Left ventricle myocardium inferior (tissue), 1 donor: ENCODE measurements at regions of chr16 and their contacts with region 1.

Region 1: GRCh38 chr16:54817446-54817845 is 113.2 kb upstream of the IRX5 start:
- DNase-seq: no peak
- H3K4me3 ChIP-seq: no peak overlapping the region
- H3K27ac ChIP-seq: no peak overlapping the region
- H3K4me1 ChIP-seq: no peaks in the 10 kb centered on the region
- H3K27me3 ChIP-seq: no peaks in the 10 kb centered on the region
- CTCF ChIP-seq: peak; percentile 54

Region 2: GRCh38 chr16:54286090-54286993 is 531.1 kb before region 1 on chr16 and contains the start of gene IRX3:
- intact Hi-C with region 1: loop called (anchors 10 kb)
- DNase-seq: peak; percentile 93
- H3K4me3 ChIP-seq: peak within 1 kb of the TSS; percentile 83
- H3K27ac ChIP-seq: peak within 1 kb of the TSS; percentile 93
- H3K4me1 ChIP-seq: peaks cover 56% of the 10 kb centered on the region
- H3K27me3 ChIP-seq: peaks cover 79% of the 10 kb centered on the region
- CTCF ChIP-seq: no peak
- total RNA-seq, gene IRX3: 94.4 TPM

Region 3: DNA sequence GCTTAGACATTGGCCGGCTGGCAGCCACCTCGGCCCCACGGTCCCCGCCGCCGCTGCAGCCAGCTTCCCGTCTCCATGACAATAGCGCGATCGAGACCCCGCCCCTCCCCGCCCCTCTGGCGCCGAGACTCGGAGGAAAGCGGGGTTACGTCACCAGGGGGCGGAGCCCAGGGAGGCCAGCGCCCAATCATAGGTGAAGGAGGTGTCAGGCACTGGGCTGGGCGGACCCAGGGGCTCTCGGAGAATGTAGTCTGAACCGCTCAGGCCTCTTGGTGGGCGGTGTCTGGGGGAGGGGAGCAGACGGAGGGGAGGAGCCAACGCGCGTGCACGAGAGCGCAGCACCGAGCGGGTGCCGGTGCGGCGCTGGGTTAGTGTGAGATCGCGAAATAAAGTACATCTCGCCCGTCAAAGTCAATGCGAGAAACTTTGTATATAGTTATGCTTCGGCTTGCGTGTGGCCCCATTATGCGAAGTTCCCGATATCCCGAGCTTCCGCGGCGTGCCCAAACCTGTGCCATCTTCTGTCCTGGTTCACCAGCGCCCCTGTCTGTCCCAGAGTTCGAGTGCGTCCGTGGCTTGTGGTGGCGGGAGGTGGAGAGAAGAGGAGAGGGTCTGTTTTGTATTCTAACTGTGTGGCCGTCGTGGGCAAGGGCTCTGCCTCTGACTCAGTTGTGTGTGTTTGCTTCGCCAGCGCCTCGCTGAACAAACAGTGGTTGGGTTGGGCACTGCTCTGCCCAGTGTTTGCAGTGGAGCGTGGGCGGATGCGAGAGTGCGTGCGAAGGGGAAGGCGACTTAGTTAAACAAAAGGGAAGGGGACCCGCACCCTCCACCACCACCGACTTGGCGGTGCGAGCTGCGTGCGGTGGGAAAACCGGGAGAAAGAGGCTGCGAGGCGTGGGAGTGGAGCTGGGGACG is 111.9 kb after region 1 on chr16:
- intact Hi-C with region 1: loop called (anchors 10 kb)
- DNase-seq: peak; percentile 100
- H3K4me3 ChIP-seq: peak overlapping the region; percentile 85
- H3K27ac ChIP-seq: peak overlapping the region; percentile 92
- H3K4me1 ChIP-seq: peaks cover 41% of the 10 kb centered on the region
- H3K27me3 ChIP-seq: peaks cover 58% of the 10 kb centered on the region
- CTCF ChIP-seq: peak; percentile 40

Region 4: GRCh38 chr16:55146966-55147365 is 329.5 kb after region 1 on chr16:
- intact Hi-C with region 1: no loop called
- DNase-seq: no peak
- H3K4me3 ChIP-seq: no peak overlapping the region
- H3K27ac ChIP-seq: no peak overlapping the region
- H3K4me1 ChIP-seq: no peaks in the 10 kb centered on the region
- H3K27me3 ChIP-seq: peaks cover 24% of the 10 kb centered on the region
- CTCF ChIP-seq: no peak